ENCODE measurements at regions of chrX and their contacts with region 1.

Region 1: GRCh38 chrX:101595739-101596419 is 21.9 kb downstream of the ARMCX6 start:
- DNase-seq: peak in 1 of 2 donors; percentile 78
- ATAC-seq: peak; percentile 75 to 83 (median 81)
- H3K4me3 ChIP-seq: no peak overlapping the region
- H3K4me3 Mint-ChIP-seq: no peak overlapping the region
- H3K27ac ChIP-seq: no peak overlapping the region
- H3K27ac Mint-ChIP-seq: no peak overlapping the region
- H3K4me1 ChIP-seq: no peaks in the 10 kb centered on the region
- H3K4me1 Mint-ChIP-seq: no peaks in the 10 kb centered on the region
- H3K27me3 ChIP-seq: no peaks in the 10 kb centered on the region
- H3K27me3 Mint-ChIP-seq: peaks cover 15 to 23% of the 10 kb centered on the region in 2 donors
- CTCF ChIP-seq: peak; percentile 67

Region 2: GRCh38 chrX:101415180-101416145 is 180.4 kb before region 1 on chrX:
- intact Hi-C with region 1: loop called (anchors 5 kb)
- DNase-seq: peak in 1 of 2 donors; percentile 86
- ATAC-seq: peak; percentile 70 to 78 (median 76)
- H3K4me3 ChIP-seq: no peak overlapping the region
- H3K4me3 Mint-ChIP-seq: peak overlapping the region; percentile 67
- H3K27ac ChIP-seq: peak overlapping the region; percentile 45
- H3K27ac Mint-ChIP-seq: peak overlapping the region; percentile 73 to 76
- H3K4me1 ChIP-seq: peaks cover 29% of the 10 kb centered on the region
- H3K4me1 Mint-ChIP-seq: peaks cover 23 to 44% of the 10 kb centered on the region in 2 donors
- H3K27me3 ChIP-seq: no peaks in the 10 kb centered on the region
- H3K27me3 Mint-ChIP-seq: no peaks in the 10 kb centered on the region
- CTCF ChIP-seq: peak; percentile 57

Region 3: DNA sequence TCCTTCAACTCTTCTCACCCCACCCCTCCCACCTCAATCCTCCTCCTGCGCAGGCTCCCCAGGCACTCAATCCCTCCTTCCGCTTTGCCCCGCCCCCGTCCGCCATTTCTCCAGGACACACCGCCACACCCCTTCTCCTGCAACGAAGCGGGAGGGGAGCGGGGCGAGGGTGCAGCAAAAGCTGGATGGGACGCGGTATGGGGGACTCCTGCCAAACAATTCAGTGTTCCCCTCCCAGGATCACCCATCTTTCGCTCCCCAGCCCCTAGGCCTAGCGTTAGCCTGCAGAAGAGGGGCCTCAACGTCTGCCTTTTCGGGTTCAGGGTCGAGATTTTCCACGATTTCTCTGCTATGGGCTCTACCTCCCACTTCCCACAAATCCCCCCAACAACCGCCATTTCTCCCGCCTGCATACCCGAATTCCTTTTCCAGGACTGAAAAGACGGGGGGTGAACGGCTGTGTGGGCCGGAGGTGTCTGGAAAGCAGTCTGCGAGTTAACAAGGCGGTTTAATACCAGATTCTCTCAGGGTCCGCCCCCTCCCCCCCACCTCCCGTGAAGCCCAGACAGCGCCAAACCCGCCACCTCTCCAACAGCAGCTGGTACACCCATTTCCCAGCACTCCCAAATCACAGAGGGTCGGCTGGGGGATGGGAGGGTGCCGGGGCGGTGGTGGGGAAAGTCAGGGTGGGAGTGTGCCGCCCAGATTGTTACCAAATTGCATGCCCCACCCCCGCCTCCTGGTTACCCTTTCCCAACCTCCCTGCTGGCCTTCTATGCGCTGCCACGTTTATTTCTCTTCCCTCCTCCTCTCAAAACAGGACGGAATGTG is 63.0 kb after region 1 on chrX:
- intact Hi-C with region 1: no loop called
- DNase-seq: peak in 1 of 2 donors; percentile 72
- ATAC-seq: peak in 2 of 3 donors; percentile 65 to 79
- H3K4me3 ChIP-seq: peak overlapping the region; percentile 67
- H3K4me3 Mint-ChIP-seq: peak overlapping the region; percentile 83
- H3K27ac ChIP-seq: no peak overlapping the region
- H3K27ac Mint-ChIP-seq: peak overlapping the region in 1 of 2 donors; percentile 58
- H3K4me1 ChIP-seq: peaks cover 14% of the 10 kb centered on the region
- H3K4me1 Mint-ChIP-seq: peaks cover 10 to 20% of the 10 kb centered on the region in 2 donors
- H3K27me3 ChIP-seq: no peaks in the 10 kb centered on the region
- H3K27me3 Mint-ChIP-seq: peaks cover 9 to 30% of the 10 kb centered on the region in 2 donors
- CTCF ChIP-seq: no peak

Region 4: DNA sequence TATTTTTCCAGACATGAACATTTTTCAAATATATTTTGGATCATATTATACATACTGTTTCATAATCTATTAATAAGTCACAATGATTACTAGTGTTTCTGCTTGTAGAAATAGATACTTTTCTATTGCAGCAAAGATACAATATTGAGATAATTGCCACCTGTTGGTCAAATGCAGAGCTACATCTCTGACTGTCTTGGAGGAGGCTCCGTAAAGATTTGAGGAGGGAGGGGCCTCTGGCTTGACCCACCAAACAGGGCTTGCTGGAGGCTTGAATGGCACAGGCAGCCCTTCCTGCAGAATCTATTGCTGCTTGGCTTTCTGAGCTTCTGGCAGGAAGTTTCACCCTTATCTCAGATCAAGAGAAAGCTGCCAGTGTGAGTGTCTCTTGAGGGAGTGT is 163.1 kb after region 1 on chrX:
- intact Hi-C with region 1: loop called (anchors 5 kb)
- DNase-seq: peak in 1 of 2 donors; percentile 58
- ATAC-seq: peak in 2 of 3 donors; percentile 64 to 74
- H3K4me3 ChIP-seq: no peak overlapping the region
- H3K4me3 Mint-ChIP-seq: no peak overlapping the region
- H3K27ac ChIP-seq: no peak overlapping the region
- H3K27ac Mint-ChIP-seq: no peak overlapping the region
- H3K4me1 ChIP-seq: no peaks in the 10 kb centered on the region
- H3K4me1 Mint-ChIP-seq: no peaks in the 10 kb centered on the region
- H3K27me3 ChIP-seq: no peaks in the 10 kb centered on the region
- H3K27me3 Mint-ChIP-seq: peaks cover 0 to 36% of the 10 kb centered on the region in 2 donors
- CTCF ChIP-seq: peak; percentile 43

Region 5: GRCh38 chrX:101799387-101799786 is 203.5 kb after region 1 on chrX:
- intact Hi-C with region 1: loop called (anchors 5 kb)
- DNase-seq: peak; percentile 40 to 91
- ATAC-seq: peak; percentile 99 to 100 (median 100)
- H3K4me3 ChIP-seq: no peak overlapping the region
- H3K4me3 Mint-ChIP-seq: peak overlapping the region; percentile 15
- H3K27ac ChIP-seq: no peak overlapping the region
- H3K27ac Mint-ChIP-seq: no peak overlapping the region
- H3K4me1 ChIP-seq: no peaks in the 10 kb centered on the region
- H3K4me1 Mint-ChIP-seq: peaks cover 0 to 7% of the 10 kb centered on the region in 2 donors
- H3K27me3 ChIP-seq: no peaks in the 10 kb centered on the region
- H3K27me3 Mint-ChIP-seq: peaks cover 0 to 9% of the 10 kb centered on the region in 2 donors
- CTCF ChIP-seq: peak; percentile 51

Region 6: GRCh38 chrX:102085706-102086105 is 489.8 kb after region 1 on chrX:
- intact Hi-C with region 1: loop called (anchors 5 kb)
- DNase-seq: peak in 1 of 2 donors; percentile 10
- ATAC-seq: no peak
- H3K4me3 ChIP-seq: no peak overlapping the region
- H3K4me3 Mint-ChIP-seq: no peak overlapping the region
- H3K27ac ChIP-seq: no peak overlapping the region
- H3K27ac Mint-ChIP-seq: no peak overlapping the region
- H3K4me1 ChIP-seq: no peaks in the 10 kb centered on the region
- H3K4me1 Mint-ChIP-seq: no peaks in the 10 kb centered on the region
- H3K27me3 ChIP-seq: no peaks in the 10 kb centered on the region
- H3K27me3 Mint-ChIP-seq: peaks cover 0 to 8% of the 10 kb centered on the region in 2 donors
- CTCF ChIP-seq: no peak

Region 7: DNA sequence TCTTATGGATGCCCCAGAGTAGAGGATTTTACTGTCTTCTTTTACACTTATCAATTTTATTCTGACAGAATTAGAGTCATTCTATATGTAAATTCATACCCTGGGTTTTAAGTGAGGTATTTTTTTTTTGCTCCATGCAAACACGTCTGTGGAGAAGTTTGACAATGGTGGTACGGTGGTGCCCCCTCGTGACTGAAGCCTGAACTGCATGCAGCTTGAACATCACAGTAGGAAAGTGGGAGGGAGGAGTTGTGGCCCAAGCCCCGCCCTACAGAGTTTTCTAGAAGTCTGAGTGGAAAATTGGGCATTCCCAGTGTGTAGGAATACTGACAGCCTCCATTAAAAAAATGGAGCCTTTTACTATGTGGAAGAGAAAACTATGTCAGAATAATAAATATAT is 1267.9 kb after region 1 on chrX:
- intact Hi-C with region 1: loop called (anchors 5 kb)
- DNase-seq: peak; percentile 72 to 86
- ATAC-seq: peak; percentile 93 to 100 (median 100)
- H3K4me3 ChIP-seq: no peak overlapping the region
- H3K4me3 Mint-ChIP-seq: no peak overlapping the region
- H3K27ac ChIP-seq: no peak overlapping the region
- H3K27ac Mint-ChIP-seq: no peak overlapping the region
- H3K4me1 ChIP-seq: no peaks in the 10 kb centered on the region
- H3K4me1 Mint-ChIP-seq: no peaks in the 10 kb centered on the region
- H3K27me3 ChIP-seq: no peaks in the 10 kb centered on the region
- H3K27me3 Mint-ChIP-seq: no peaks in the 10 kb centered on the region
- CTCF ChIP-seq: peak; percentile 73